Esophagus muscularis mucosa (tissue), 4 donors: ENCODE measurements at regions of chr5 and their contacts with region 1.

Region 1: GRCh38 chr5:171630027-171630669 is 155.5 kb upstream of the SMIM23 start:
- DNase-seq: no peak
- H3K4me3 ChIP-seq: peak overlapping the region in 2 of 4 donors; percentile 17 to 40
- H3K27ac ChIP-seq: no peak overlapping the region
- H3K4me1 ChIP-seq: peaks cover 6 to 14% (median 10%) of the 10 kb centered on the region in 4 donors
- H3K27me3 ChIP-seq: peaks cover 0 to 87% (median 8%) of the 10 kb centered on the region in 4 donors
- CTCF ChIP-seq: peak; percentile 44 to 60 (median 46)
- EP300 ChIP-seq: no peak
- POLR2A ChIP-seq: no peak

Region 2: GRCh38 chr5:171207256-171207847 is 422.8 kb before region 1 on chr5:
- intact Hi-C with region 1: no loop called
- DNase-seq: no peak
- H3K4me3 ChIP-seq: no peak overlapping the region
- H3K27ac ChIP-seq: no peak overlapping the region
- H3K4me1 ChIP-seq: peaks cover 0 to 4% (median 0%) of the 10 kb centered on the region in 4 donors
- H3K27me3 ChIP-seq: no peaks in the 10 kb centered on the region
- CTCF ChIP-seq: peak; percentile 42 to 60 (median 56)
- EP300 ChIP-seq: no peak
- POLR2A ChIP-seq: no peak

Region 3: DNA sequence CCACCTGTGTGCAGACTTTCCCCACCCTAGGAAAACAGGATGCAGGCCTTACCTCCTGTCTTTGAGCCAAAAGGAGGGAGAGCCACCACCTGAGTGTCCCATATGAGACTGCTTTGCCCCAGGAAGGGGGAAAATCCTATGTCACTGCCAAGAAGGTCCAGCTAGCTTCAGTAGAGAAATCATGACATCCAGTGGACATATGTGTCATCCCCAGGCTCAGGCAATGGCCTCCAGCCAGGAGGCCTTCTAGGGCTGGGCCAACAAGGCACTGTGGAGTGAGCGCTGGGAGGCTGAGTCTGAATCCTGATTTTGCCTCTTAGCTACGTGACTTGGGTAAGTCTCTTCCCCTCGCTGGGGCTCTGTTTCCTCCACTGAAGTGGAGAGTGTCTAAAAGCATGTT is 215.7 kb after region 1 on chr5:
- intact Hi-C with region 1: loop called (anchors 5 kb)
- DNase-seq: no peak
- H3K4me3 ChIP-seq: no peak overlapping the region
- H3K27ac ChIP-seq: no peak overlapping the region
- H3K4me1 ChIP-seq: peaks cover 0 to 6% (median 0%) of the 10 kb centered on the region in 4 donors
- H3K27me3 ChIP-seq: no peaks in the 10 kb centered on the region
- CTCF ChIP-seq: peak in 1 of 3 experiments; percentile 12
- EP300 ChIP-seq: no peak
- POLR2A ChIP-seq: no peak

Region 4: GRCh38 chr5:172035039-172035438 is 404.9 kb after region 1 on chr5:
- intact Hi-C with region 1: loop called (anchors 10 kb)
- DNase-seq: no peak
- H3K4me3 ChIP-seq: no peak overlapping the region
- H3K27ac ChIP-seq: no peak overlapping the region
- H3K4me1 ChIP-seq: peaks cover 0 to 3% (median 1%) of the 10 kb centered on the region in 4 donors
- H3K27me3 ChIP-seq: no peaks in the 10 kb centered on the region
- CTCF ChIP-seq: no peak
- EP300 ChIP-seq: no peak
- POLR2A ChIP-seq: no peak